Activated CD8-positive, alpha-beta T cell treated with anti-CD3 and anti-CD28 coated beads for 36 hours (primary cell): ENCODE measurements at regions of chr10 and their contacts with region 1.

Region 1: DNA sequence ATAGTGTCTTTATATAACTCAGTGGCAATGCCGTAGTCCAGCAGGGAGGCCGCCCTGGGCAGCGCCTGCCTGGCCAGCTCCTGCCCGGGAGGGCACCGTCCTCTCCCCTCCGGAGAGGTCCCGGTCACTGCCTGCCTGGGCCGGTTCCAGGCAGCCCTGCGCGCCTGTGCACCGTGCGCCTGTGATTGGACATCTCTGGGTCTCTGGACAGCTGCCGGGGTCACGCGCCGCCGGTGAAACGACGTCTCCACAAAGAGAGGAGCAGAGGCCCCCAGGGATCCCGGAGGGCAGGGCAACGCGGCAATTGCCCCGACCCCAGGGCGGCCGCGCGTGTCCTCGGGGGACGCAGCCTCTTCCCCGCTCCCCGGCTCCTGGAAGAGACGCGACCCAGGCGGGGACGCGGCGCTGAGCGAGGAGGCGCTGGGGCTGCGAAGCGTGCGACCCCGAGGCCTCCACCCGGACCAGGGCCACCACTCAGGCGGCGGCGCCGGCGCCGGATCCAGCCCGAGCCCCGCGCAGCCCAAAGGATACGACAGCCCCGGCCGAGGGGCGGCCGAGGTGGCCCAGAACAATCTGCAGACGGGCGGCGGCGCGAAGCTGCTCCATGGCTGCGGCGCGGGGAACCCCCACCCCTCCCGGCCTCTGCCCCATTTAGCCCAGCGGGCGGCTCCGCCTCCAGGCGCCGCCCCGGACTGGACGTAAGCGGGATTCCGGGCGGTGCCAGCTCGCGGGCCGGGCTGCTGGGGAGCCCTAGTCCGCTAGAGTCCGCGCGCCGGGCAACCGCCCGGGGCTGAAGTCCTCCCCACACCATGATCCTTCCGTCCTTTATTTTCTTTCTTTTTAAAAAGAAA is at the start of gene PHYH:
- DNase-seq: peak; percentile 81
- ATAC-seq: peak; percentile 60
- H3K4me3 Mint-ChIP-seq: peak within 1 kb of the TSS; percentile 79
- H3K27ac Mint-ChIP-seq: peak within 1 kb of the TSS; percentile 90
- H3K4me1 Mint-ChIP-seq: peaks cover 15% of the 10 kb centered on the region
- H3K27me3 Mint-ChIP-seq: no peaks in the 10 kb centered on the region
- CTCF ChIP-seq: no peak
- total RNA-seq, gene PHYH: 14.6 to 16.3 TPM

Region 2: GRCh38 chr10:13160934-13161856 is 138.5 kb before region 1 on chr10 and contains the start of gene MCM10:
- CTCF ChIA-PET with region 1: interaction called, 30 read pairs
- POLR2A ChIA-PET with region 1: interaction called, 16 read pairs
- intact Hi-C with region 1: loop called (anchors 1 kb)
- DNase-seq: peak; percentile 99
- ATAC-seq: peak; percentile 100
- H3K4me3 Mint-ChIP-seq: peak within 1 kb of the TSS; percentile 96
- H3K27ac Mint-ChIP-seq: peak within 1 kb of the TSS; percentile 78
- H3K4me1 Mint-ChIP-seq: peaks cover 25% of the 10 kb centered on the region
- H3K27me3 Mint-ChIP-seq: no peaks in the 10 kb centered on the region
- CTCF ChIP-seq: peak; percentile 98
- total RNA-seq, gene MCM10: 65.4 to 69.0 TPM

Region 3: GRCh38 chr10:13271552-13272163 is 28.0 kb before region 1 on chr10:
- CTCF ChIA-PET with region 1: interaction called, 11 read pairs
- POLR2A ChIA-PET with region 1: interaction called, 3 read pairs
- intact Hi-C with region 1: no loop called
- DNase-seq: peak; percentile 70
- ATAC-seq: peak; percentile 82
- H3K4me3 Mint-ChIP-seq: no peak overlapping the region
- H3K27ac Mint-ChIP-seq: peak overlapping the region; percentile 20
- H3K4me1 Mint-ChIP-seq: peaks cover 8% of the 10 kb centered on the region
- H3K27me3 Mint-ChIP-seq: no peaks in the 10 kb centered on the region
- CTCF ChIP-seq: peak; percentile 38

Region 4: DNA sequence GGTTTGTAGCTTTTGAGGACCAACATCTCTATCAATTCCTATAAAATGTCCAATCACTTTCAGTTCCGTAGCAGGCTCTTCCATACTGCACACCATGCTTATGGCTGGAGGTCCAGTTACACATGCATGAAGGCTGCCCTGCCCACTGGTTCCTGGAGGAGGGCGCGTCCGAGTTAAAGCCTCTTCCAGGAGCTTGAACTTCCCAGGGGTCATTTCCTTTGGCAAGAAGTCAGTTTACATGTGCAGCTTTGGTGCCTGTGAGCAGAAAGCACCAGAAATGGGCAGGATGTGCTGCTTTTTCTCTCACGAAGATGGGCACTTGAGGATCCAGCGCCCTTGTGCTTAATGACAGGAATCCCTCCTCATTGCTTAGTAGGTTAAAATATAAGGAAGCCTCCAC is 17.8 kb after region 1 on chr10:
- CTCF ChIA-PET with region 1: interaction called, 10 read pairs
- POLR2A ChIA-PET with region 1: interaction called, 5 read pairs
- intact Hi-C with region 1: no loop called
- DNase-seq: no peak
- ATAC-seq: no peak
- H3K4me3 Mint-ChIP-seq: no peak overlapping the region
- H3K27ac Mint-ChIP-seq: no peak overlapping the region
- H3K4me1 Mint-ChIP-seq: no peaks in the 10 kb centered on the region
- H3K27me3 Mint-ChIP-seq: no peaks in the 10 kb centered on the region
- CTCF ChIP-seq: no peak

Region 5: GRCh38 chr10:13349463-13350274 is 50.0 kb after region 1 on chr10:
- CTCF ChIA-PET with region 1: interaction called, 8 read pairs
- POLR2A ChIA-PET with region 1: interaction called, 8 read pairs
- intact Hi-C with region 1: loop called (anchors 5 kb)
- DNase-seq: peak; percentile 66
- ATAC-seq: peak; percentile 7
- H3K4me3 Mint-ChIP-seq: peak overlapping the region; percentile 86
- H3K27ac Mint-ChIP-seq: peak overlapping the region; percentile 95
- H3K4me1 Mint-ChIP-seq: peaks cover 55% of the 10 kb centered on the region
- H3K27me3 Mint-ChIP-seq: no peaks in the 10 kb centered on the region
- CTCF ChIP-seq: no peak